ENCODE measurements at regions of chr9 and their contacts with region 1.

Region 1: GRCh38 chr9:123349691-123350480 is 6.1 kb upstream of the CRB2 start:
- DNase-seq: peak; percentile 85
- ATAC-seq: peak; percentile 87
- H3K4me3 ChIP-seq: peak overlapping the region in 3 of 5 experiments; percentile 19 to 50 (median 23)
- H3K4me3 Mint-ChIP-seq: peak overlapping the region; percentile 20
- H3K27ac ChIP-seq: no peak overlapping the region
- H3K27ac Mint-ChIP-seq: no peak overlapping the region
- H3K4me1 ChIP-seq: peaks cover 30 to 52% of the 10 kb centered on the region in 2 donors
- H3K4me1 Mint-ChIP-seq: peaks cover 19% of the 10 kb centered on the region
- H3K27me3 ChIP-seq: peaks cover 0 to 4% (median 0%) of the 10 kb centered on the region in 4 experiments
- H3K27me3 Mint-ChIP-seq: peaks cover 4% of the 10 kb centered on the region
- CTCF ChIP-seq: peak; percentile 95

Region 2: GRCh38 chr9:122883125-122883524 is 466.8 kb before region 1 on chr9:
- CTCF ChIA-PET with region 1: no interaction called
- POLR2A ChIA-PET with region 1: no interaction called
- intact Hi-C with region 1: no loop called
- DNase-seq: no peak
- ATAC-seq: no peak
- H3K4me3 ChIP-seq: no peak overlapping the region
- H3K4me3 Mint-ChIP-seq: no peak overlapping the region
- H3K27ac ChIP-seq: peak overlapping the region in 1 of 2 donors; percentile 23
- H3K27ac Mint-ChIP-seq: peak overlapping the region; percentile 46
- H3K4me1 ChIP-seq: no peaks in the 10 kb centered on the region
- H3K4me1 Mint-ChIP-seq: no peaks in the 10 kb centered on the region
- H3K27me3 ChIP-seq: no peaks in the 10 kb centered on the region
- H3K27me3 Mint-ChIP-seq: no peaks in the 10 kb centered on the region
- CTCF ChIP-seq: no peak

Region 3: GRCh38 chr9:122904823-122905710 is 444.8 kb before region 1 on chr9 and contains the start of gene RC3H2:
- CTCF ChIA-PET with region 1: interaction called, 7 read pairs
- POLR2A ChIA-PET with region 1: no interaction called
- intact Hi-C with region 1: loop called (anchors 10 kb)
- DNase-seq: peak; percentile 99
- ATAC-seq: peak; percentile 91
- H3K4me3 ChIP-seq: peak within 1 kb of the TSS; percentile 67 to 95 (median 85)
- H3K4me3 Mint-ChIP-seq: peak within 1 kb of the TSS; percentile 97
- H3K27ac ChIP-seq: peak within 1 kb of the TSS; percentile 79 to 94
- H3K27ac Mint-ChIP-seq: peak within 1 kb of the TSS; percentile 99
- H3K4me1 ChIP-seq: peaks cover 17 to 28% of the 10 kb centered on the region in 2 donors
- H3K4me1 Mint-ChIP-seq: peaks cover 29% of the 10 kb centered on the region
- H3K27me3 ChIP-seq: no peaks in the 10 kb centered on the region
- H3K27me3 Mint-ChIP-seq: no peaks in the 10 kb centered on the region
- CTCF ChIP-seq: peak; percentile 12
- total RNA-seq, gene RC3H2: 74.4 and 77.3 TPM in 2 replicates

Region 4: GRCh38 chr9:123102375-123103110 is 247.3 kb before region 1 on chr9:
- CTCF ChIA-PET with region 1: interaction called, 83 read pairs
- POLR2A ChIA-PET with region 1: no interaction called
- intact Hi-C with region 1: loop called (anchors 1 kb)
- DNase-seq: no peak
- ATAC-seq: no peak
- H3K4me3 ChIP-seq: no peak overlapping the region
- H3K4me3 Mint-ChIP-seq: no peak overlapping the region
- H3K27ac ChIP-seq: peak overlapping the region in 1 of 2 donors; percentile 54
- H3K27ac Mint-ChIP-seq: peak overlapping the region; percentile 66
- H3K4me1 ChIP-seq: no peaks in the 10 kb centered on the region
- H3K4me1 Mint-ChIP-seq: peaks cover 2% of the 10 kb centered on the region
- H3K27me3 ChIP-seq: no peaks in the 10 kb centered on the region
- H3K27me3 Mint-ChIP-seq: no peaks in the 10 kb centered on the region
- CTCF ChIP-seq: peak; percentile 36

Region 5: GRCh38 chr9:123174887-123175518 is 174.9 kb before region 1 on chr9:
- CTCF ChIA-PET with region 1: interaction called, 15 read pairs
- POLR2A ChIA-PET with region 1: no interaction called
- intact Hi-C with region 1: no loop called
- DNase-seq: peak; percentile 83
- ATAC-seq: peak; percentile 91
- H3K4me3 ChIP-seq: peak overlapping the region in 1 of 5 experiments; percentile 53
- H3K4me3 Mint-ChIP-seq: peak overlapping the region; percentile 76
- H3K27ac ChIP-seq: peak overlapping the region; percentile 85 to 96
- H3K27ac Mint-ChIP-seq: peak overlapping the region; percentile 93
- H3K4me1 ChIP-seq: peaks cover 50 to 54% of the 10 kb centered on the region in 2 donors
- H3K4me1 Mint-ChIP-seq: peaks cover 74% of the 10 kb centered on the region
- H3K27me3 ChIP-seq: no peaks in the 10 kb centered on the region
- H3K27me3 Mint-ChIP-seq: no peaks in the 10 kb centered on the region
- CTCF ChIP-seq: no peak

Region 6: DNA sequence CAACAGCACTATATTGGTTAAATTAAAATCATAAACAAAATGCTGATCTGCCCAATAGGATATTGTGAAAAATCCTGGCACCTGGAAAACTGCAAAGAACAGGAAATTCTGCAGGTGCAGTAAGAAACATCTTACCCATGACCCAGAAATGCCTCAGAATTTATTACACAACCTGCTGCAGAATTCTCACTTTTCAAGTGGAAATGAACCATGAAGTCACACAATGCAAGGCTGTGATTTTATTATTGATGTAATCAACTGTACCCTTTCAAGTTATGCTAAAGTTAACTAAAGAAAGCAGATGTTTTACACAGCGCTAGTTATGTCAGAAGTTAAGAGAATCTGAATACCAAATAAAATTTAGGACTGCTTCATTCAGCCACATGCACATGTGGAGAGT is 87.5 kb before region 1 on chr9:
- CTCF ChIA-PET with region 1: interaction called, 15 read pairs
- POLR2A ChIA-PET with region 1: no interaction called
- intact Hi-C with region 1: no loop called
- DNase-seq: no peak
- ATAC-seq: no peak
- H3K4me3 ChIP-seq: no peak overlapping the region
- H3K4me3 Mint-ChIP-seq: no peak overlapping the region
- H3K27ac ChIP-seq: peak overlapping the region; percentile 1 to 46
- H3K27ac Mint-ChIP-seq: no peak overlapping the region
- H3K4me1 ChIP-seq: peaks cover 58 to 76% of the 10 kb centered on the region in 2 donors
- H3K4me1 Mint-ChIP-seq: peaks cover 86% of the 10 kb centered on the region
- H3K27me3 ChIP-seq: no peaks in the 10 kb centered on the region
- H3K27me3 Mint-ChIP-seq: no peaks in the 10 kb centered on the region
- CTCF ChIP-seq: no peak

Region 7: GRCh38 chr9:123338710-123339665 is 10.9 kb before region 1 on chr9:
- CTCF ChIA-PET with region 1: interaction called, 57 read pairs
- POLR2A ChIA-PET with region 1: interaction called, 11 read pairs
- intact Hi-C with region 1: no loop called
- DNase-seq: peak; percentile 90
- ATAC-seq: peak; percentile 58
- H3K4me3 ChIP-seq: peak overlapping the region in 4 of 5 experiments; percentile 30 to 46 (median 45)
- H3K4me3 Mint-ChIP-seq: peak overlapping the region; percentile 94
- H3K27ac ChIP-seq: peak overlapping the region; percentile 98 to 99
- H3K27ac Mint-ChIP-seq: peak overlapping the region; percentile 100
- H3K4me1 ChIP-seq: peaks cover 99 to 100% of the 10 kb centered on the region in 2 donors
- H3K4me1 Mint-ChIP-seq: peaks cover 96% of the 10 kb centered on the region
- H3K27me3 ChIP-seq: no peaks in the 10 kb centered on the region
- H3K27me3 Mint-ChIP-seq: no peaks in the 10 kb centered on the region
- CTCF ChIP-seq: no peak

Measured in B cell (primary cell).